A549 (cell line): ENCODE measurements at regions of chr5 and their contacts with region 1.

Region 1: DNA sequence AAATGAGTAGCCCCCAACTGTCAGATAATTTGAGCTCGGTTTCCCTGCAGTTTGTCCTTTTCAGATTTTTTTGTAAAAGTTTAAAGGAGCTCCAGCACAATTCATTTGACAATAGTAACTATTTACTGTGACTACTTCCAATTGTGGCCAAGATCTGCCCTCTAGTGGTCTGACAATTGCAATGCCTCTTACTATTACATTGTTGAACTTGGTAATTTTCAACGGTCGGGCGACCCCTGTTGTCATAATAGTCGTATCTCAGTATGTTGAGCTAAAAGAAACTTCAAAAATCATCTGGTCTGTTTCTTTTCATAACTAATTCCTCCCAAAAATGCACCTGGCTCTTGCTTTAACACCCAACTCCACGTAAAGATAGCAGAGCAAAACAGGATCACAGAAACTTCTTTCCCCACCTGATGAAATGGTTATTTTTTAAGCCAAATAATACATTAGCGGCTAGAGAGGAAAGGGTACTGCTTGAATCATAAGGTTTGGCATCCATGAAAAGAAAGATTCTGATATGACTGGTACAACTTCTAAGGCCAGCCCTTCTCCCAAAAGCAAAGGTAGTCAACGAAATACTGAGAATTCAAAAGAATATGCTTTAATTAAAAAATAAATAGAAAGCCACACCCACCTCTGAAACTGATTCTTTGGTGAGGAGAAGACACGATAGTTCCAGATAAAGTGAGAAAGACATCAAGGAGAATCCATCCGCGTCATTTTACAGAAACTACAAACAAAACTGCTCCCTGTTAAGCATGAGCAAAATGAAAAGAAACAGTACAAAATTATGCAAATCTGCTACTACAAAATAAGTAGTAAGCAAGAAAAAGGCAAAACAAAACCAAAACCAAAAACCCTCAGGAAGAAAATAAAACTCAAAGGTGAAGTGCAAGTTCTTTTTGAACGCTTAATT is 76.9 kb upstream of the HTR4 start:
- DNase-seq: peak; percentile 64 to 85
- ATAC-seq: peak; percentile 80 to 93
- H3K4me3 ChIP-seq: peak overlapping the region; percentile 19; the same call in 1 of the 3 replicates
- H3K27ac ChIP-seq: no peak overlapping the region
- H3K4me1 ChIP-seq: peaks cover 11% of the 10 kb centered on the region; the same call in 1 of the 3 replicates
- CTCF ChIP-seq: peak; percentile 99
- EP300 ChIP-seq: no peak
- POLR2A ChIP-seq: no peak
- RAD21 ChIP-seq: peak; percentile 84 to 85

Region 2: GRCh38 chr5:148179234-148179824 is 551.9 kb before region 1 on chr5:
- CTCF ChIA-PET with region 1: interaction called, 14 read pairs
- POLR2A ChIA-PET with region 1: no interaction called
- DNase-seq: peak in 1 of 2 experiments; percentile 71
- ATAC-seq: peak; percentile 70 to 77; a peak in 4 of 6 replicates
- H3K4me3 ChIP-seq: no peak overlapping the region
- H3K27ac ChIP-seq: no peak overlapping the region
- H3K4me1 ChIP-seq: no peaks in the 10 kb centered on the region
- CTCF ChIP-seq: peak; percentile 77
- EP300 ChIP-seq: no peak
- POLR2A ChIP-seq: no peak
- RAD21 ChIP-seq: peak; percentile 79 to 84

Region 3: GRCh38 chr5:148457183-148457620 is 274.0 kb before region 1 on chr5:
- CTCF ChIA-PET with region 1: interaction called, 13 read pairs
- POLR2A ChIA-PET with region 1: no interaction called
- DNase-seq: peak; percentile 9 to 12
- ATAC-seq: peak; percentile 69 to 82; a peak in 4 of 6 replicates
- H3K4me3 ChIP-seq: no peak overlapping the region
- H3K27ac ChIP-seq: no peak overlapping the region
- H3K4me1 ChIP-seq: no peaks in the 10 kb centered on the region
- CTCF ChIP-seq: peak; percentile 42
- EP300 ChIP-seq: no peak
- POLR2A ChIP-seq: no peak
- RAD21 ChIP-seq: peak in 1 of 2 experiments; percentile 27; a peak in 2 of 5 replicates

Region 4: GRCh38 chr5:148532962-148533670 is 198.1 kb before region 1 on chr5:
- CTCF ChIA-PET with region 1: no interaction called
- POLR2A ChIA-PET with region 1: no interaction called
- DNase-seq: no peak
- ATAC-seq: no peak
- H3K4me3 ChIP-seq: no peak overlapping the region
- H3K27ac ChIP-seq: no peak overlapping the region
- H3K4me1 ChIP-seq: no peaks in the 10 kb centered on the region
- CTCF ChIP-seq: no peak
- EP300 ChIP-seq: no peak
- POLR2A ChIP-seq: no peak
- RAD21 ChIP-seq: no peak

Region 5: GRCh38 chr5:148653836-148654781 is 77.1 kb before region 1 on chr5 and contains the start of gene HTR4:
- CTCF ChIA-PET with region 1: no interaction called
- POLR2A ChIA-PET with region 1: no interaction called
- DNase-seq: no peak
- ATAC-seq: peak in 1 of 2 experiments; percentile 13; a peak in 1 of 6 replicates
- H3K4me3 ChIP-seq: no peak within 1 kb of the TSS
- H3K27ac ChIP-seq: no peak within 1 kb of the TSS
- H3K4me1 ChIP-seq: no peaks in the 10 kb centered on the region
- CTCF ChIP-seq: no peak
- EP300 ChIP-seq: no peak
- POLR2A ChIP-seq: no peak
- RAD21 ChIP-seq: no peak
- polyA plus RNA-seq, gene HTR4: not detected in 2 replicates

Region 6: GRCh38 chr5:148831590-148832565 is 100.7 kb after region 1 on chr5:
- CTCF ChIA-PET with region 1: no interaction called
- POLR2A ChIA-PET with region 1: no interaction called
- DNase-seq: no peak
- ATAC-seq: no peak
- H3K4me3 ChIP-seq: no peak overlapping the region
- H3K27ac ChIP-seq: no peak overlapping the region
- H3K4me1 ChIP-seq: 0 out of 3 replicates have a peak, but pooled peaks cover 2% of the 10 kb centered on the region
- CTCF ChIP-seq: no peak
- EP300 ChIP-seq: no peak
- POLR2A ChIP-seq: no peak
- RAD21 ChIP-seq: no peak

Region 7: DNA sequence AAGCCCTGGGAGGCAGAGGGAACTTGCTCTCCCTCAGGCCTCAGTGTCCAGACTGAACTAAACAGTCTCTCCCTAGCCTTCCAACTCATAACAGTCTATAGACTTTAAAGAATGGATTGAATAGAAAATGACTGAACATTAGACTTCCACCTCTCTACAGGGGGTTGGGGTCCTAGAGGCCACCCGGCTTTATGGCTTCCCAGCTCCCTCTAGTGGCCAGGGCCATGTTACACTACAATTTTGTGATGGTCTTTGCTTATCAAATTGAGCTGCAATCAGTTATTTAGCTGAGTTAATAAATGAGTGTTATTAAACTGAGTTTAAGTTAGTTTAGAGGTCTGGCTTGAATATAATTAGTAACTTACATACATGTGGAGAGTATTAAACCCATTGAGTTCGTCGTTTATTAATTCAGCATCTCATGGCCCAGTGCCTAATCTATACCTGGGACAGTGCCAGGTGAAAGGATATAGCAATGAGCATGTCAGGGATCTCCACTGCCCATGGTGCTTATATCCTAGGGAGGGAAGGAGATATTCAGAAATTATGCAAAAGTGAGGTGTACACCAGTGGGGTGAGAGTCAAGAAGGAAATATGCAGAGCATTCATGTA is 226.5 kb after region 1 on chr5:
- CTCF ChIA-PET with region 1: interaction called, 16 read pairs
- POLR2A ChIA-PET with region 1: no interaction called
- DNase-seq: peak in 1 of 2 experiments; percentile 30
- ATAC-seq: peak in 1 of 2 experiments; percentile 86; a peak in 3 of 6 replicates
- H3K4me3 ChIP-seq: no peak overlapping the region
- H3K27ac ChIP-seq: no peak overlapping the region
- H3K4me1 ChIP-seq: no peaks in the 10 kb centered on the region
- CTCF ChIP-seq: peak; percentile 71
- EP300 ChIP-seq: no peak
- POLR2A ChIP-seq: no peak
- RAD21 ChIP-seq: peak; percentile 61 to 73

Region 8: DNA sequence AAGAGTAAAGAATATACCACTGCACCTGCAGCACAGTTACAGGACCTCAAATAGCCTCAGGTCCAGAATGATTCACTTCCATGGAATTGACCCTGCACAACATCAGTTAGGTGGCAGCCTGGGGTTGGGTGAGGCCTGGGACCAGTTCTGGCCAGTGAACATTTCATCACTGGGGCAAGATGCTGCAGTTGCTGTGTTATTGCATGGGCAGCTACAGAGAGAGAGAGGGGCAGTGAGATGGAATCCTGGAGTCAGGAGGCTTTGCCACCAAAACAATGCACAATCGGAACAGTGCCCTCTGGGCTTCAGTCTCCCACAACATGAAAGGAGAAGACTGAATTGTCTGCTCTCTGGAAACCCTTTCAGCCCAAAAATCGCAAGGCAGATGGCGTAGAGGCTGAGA is 279.9 kb after region 1 on chr5:
- CTCF ChIA-PET with region 1: interaction called, 113 read pairs
- POLR2A ChIA-PET with region 1: no interaction called
- DNase-seq: peak in 1 of 2 experiments; percentile 8
- ATAC-seq: peak; percentile 51 to 75
- H3K4me3 ChIP-seq: no peak overlapping the region
- H3K27ac ChIP-seq: no peak overlapping the region
- H3K4me1 ChIP-seq: no peaks in the 10 kb centered on the region
- CTCF ChIP-seq: no peak
- EP300 ChIP-seq: no peak
- POLR2A ChIP-seq: no peak
- RAD21 ChIP-seq: no peak

Region 9: GRCh38 chr5:149114403-149115312 is 383.5 kb after region 1 on chr5:
- CTCF ChIA-PET with region 1: interaction called, 179 read pairs
- POLR2A ChIA-PET with region 1: no interaction called
- DNase-seq: peak; percentile 33 to 75
- ATAC-seq: peak; percentile 99 to 100
- H3K4me3 ChIP-seq: no peak overlapping the region
- H3K27ac ChIP-seq: 0 out of 6 replicates have a peak overlapping the region, but pooled peaks have one; percentile 11 to 35
- H3K4me1 ChIP-seq: peaks cover 9% of the 10 kb centered on the region; the same call in 2 of the 3 replicates
- CTCF ChIP-seq: peak; percentile 78
- EP300 ChIP-seq: no peak
- POLR2A ChIP-seq: no peak
- RAD21 ChIP-seq: peak; percentile 86 to 90